OCI-LY7 (cell line): ENCODE measurements at regions of chr4 and their contacts with region 1.

Region 1: DNA sequence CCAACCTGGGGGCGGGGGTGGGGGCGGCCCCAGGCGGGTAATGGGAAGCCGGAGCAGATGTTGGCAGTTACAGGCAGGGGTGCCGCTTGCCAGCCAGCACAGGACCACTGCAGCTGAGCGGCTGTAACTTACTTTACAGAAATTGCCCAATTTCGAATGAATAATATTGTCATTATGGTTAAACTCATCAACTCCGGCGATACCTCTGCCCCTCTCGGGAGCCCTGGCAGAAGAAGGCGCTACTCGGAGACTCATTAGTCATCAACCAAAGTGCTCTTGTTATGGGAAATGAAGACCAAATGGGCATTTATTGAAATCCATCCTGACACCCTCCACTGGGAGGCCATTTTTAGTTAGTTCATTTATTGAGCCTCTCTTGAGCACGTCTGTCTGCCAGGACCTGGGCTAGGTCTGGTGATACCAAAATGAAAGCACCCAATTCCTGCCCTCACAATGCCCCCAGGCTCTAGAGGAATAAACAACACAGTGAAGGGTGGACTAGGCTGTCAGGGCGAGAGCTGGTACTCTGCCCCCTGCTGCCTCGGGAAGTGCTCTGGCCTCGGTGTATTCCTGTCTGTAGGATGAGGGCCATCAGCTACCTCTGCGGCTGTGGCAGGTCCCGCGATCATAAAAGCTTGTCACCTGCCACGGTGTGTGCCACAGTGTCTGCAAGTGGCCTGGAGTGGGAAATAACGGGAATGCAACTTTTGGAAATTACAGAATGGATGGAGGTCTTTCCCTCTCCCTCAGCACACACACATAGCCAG is 159.1 kb upstream of the PSAPL1 start:
- DNase-seq: no peak
- H3K4me3 ChIP-seq: no peak overlapping the region
- H3K27ac ChIP-seq: no peak overlapping the region
- H3K4me1 ChIP-seq: no peaks in the 10 kb centered on the region
- CTCF ChIP-seq: no peak

Region 2: GRCh38 chr4:6582889-6583490 is 1010.8 kb before region 1 on chr4:
- CTCF ChIA-PET with region 1: interaction called, 10 read pairs
- POLR2A ChIA-PET with region 1: no interaction called
- intact Hi-C with region 1: no loop called
- DNase-seq: peak; percentile 57
- H3K4me3 ChIP-seq: no peak overlapping the region
- H3K27ac ChIP-seq: no peak overlapping the region
- H3K4me1 ChIP-seq: no peaks in the 10 kb centered on the region
- CTCF ChIP-seq: no peak

Region 3: GRCh38 chr4:7524064-7524682 is 69.7 kb before region 1 on chr4:
- CTCF ChIA-PET with region 1: no interaction called
- POLR2A ChIA-PET with region 1: no interaction called
- intact Hi-C with region 1: no loop called
- DNase-seq: no peak
- H3K4me3 ChIP-seq: no peak overlapping the region
- H3K27ac ChIP-seq: no peak overlapping the region
- H3K4me1 ChIP-seq: no peaks in the 10 kb centered on the region
- CTCF ChIP-seq: no peak

Region 4: DNA sequence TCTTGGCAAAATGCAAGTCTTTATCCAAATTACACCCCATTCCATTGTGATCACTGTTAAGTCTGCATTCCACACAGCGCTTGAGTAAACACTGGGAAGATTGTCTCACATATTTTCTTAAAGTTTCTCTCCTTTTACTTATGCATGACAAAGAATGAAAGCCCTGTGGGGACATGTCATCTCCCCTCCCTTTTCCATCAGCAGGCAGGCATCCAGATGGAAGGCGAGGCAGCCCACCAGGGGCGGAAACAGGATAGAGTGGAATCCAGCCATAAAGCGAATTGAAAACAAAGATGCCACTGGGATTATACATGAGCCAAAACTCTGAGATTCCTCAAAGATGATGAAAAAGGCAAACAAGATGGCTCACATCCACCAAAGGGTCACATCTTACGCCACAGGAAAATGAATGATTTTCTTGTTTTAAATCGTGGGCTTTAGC is 267.6 kb after region 1 on chr4:
- CTCF ChIA-PET with region 1: no interaction called
- POLR2A ChIA-PET with region 1: no interaction called
- intact Hi-C with region 1: no loop called
- DNase-seq: no peak
- H3K4me3 ChIP-seq: no peak overlapping the region
- H3K27ac ChIP-seq: no peak overlapping the region
- H3K4me1 ChIP-seq: no peaks in the 10 kb centered on the region
- CTCF ChIP-seq: no peak